Activated CD8-positive, alpha-beta T cell treated with anti-CD3 and anti-CD28 coated beads, Interleukin-2, amount 10 ng/mL, durations not matched to agents 7 days and 5 days (primary cell): ENCODE measurements at regions of chr10 and their contacts with region 1.

Region 1: GRCh38 chr10:103888113-103888841 is 29.7 kb downstream of the STN1 start:
- DNase-seq: no peak
- ATAC-seq: peak; percentile 79
- H3K4me3 Mint-ChIP-seq: no peak overlapping the region
- H3K27ac Mint-ChIP-seq: peak overlapping the region; percentile 61
- H3K4me1 Mint-ChIP-seq: peaks cover 23% of the 10 kb centered on the region
- H3K27me3 Mint-ChIP-seq: no peaks in the 10 kb centered on the region

Region 2: GRCh38 chr10:103712570-103713498 is 175.4 kb before region 1 on chr10:
- CTCF ChIA-PET with region 1: interaction called, 69 read pairs
- POLR2A ChIA-PET with region 1: no interaction called
- DNase-seq: peak; percentile 88
- ATAC-seq: peak; percentile 86
- H3K4me3 Mint-ChIP-seq: no peak overlapping the region
- H3K27ac Mint-ChIP-seq: no peak overlapping the region
- H3K4me1 Mint-ChIP-seq: peaks cover 5% of the 10 kb centered on the region
- H3K27me3 Mint-ChIP-seq: peaks cover 3% of the 10 kb centered on the region

Region 3: DNA sequence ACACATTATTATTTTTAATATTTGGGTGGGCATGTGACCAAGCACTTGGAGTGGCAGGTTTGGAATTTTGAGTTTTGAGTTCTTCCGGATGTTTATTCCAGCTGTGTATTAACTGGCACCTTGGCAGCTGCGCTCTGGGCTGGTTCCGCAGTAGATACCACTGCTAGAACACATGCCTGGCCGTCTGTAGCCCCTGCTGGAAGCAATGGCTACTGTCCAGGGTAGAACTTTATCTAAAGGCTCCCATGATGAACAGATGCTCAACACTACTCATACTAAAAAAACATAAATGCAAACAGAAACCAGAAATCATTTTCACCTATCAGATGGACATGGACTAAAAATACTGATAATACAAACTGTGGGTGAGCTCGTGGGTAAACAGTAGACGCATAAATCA is 13.5 kb before region 1 on chr10:
- CTCF ChIA-PET with region 1: interaction called, 28 read pairs
- POLR2A ChIA-PET with region 1: no interaction called
- DNase-seq: no peak
- ATAC-seq: no peak
- H3K4me3 Mint-ChIP-seq: no peak overlapping the region
- H3K27ac Mint-ChIP-seq: no peak overlapping the region
- H3K4me1 Mint-ChIP-seq: no peaks in the 10 kb centered on the region
- H3K27me3 Mint-ChIP-seq: no peaks in the 10 kb centered on the region

Region 4: DNA sequence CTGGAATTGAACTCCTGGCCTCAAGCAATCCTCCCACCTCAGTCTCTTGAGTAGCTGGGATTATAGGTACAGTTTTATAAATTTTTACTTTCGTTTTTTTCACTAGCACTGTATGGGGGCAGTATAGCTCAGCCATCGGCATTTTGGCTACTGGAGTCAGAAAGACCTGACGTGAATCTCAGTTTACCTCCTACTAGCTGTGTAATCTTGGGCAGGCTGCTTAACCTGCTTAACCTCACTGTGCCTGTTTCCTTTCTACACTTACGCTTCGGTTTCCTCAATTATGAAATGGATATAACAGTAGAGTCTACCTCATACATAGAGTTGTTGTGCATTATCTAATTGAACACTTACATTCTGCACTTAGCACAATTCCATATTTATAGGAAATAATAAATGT is 13.0 kb after region 1 on chr10:
- CTCF ChIA-PET with region 1: interaction called, 24 read pairs
- POLR2A ChIA-PET with region 1: interaction called, 3 read pairs
- DNase-seq: no peak
- ATAC-seq: peak; percentile 84
- H3K4me3 Mint-ChIP-seq: peak overlapping the region; percentile 10
- H3K27ac Mint-ChIP-seq: peak overlapping the region; percentile 48
- H3K4me1 Mint-ChIP-seq: peaks cover 49% of the 10 kb centered on the region
- H3K27me3 Mint-ChIP-seq: no peaks in the 10 kb centered on the region

Region 5: DNA sequence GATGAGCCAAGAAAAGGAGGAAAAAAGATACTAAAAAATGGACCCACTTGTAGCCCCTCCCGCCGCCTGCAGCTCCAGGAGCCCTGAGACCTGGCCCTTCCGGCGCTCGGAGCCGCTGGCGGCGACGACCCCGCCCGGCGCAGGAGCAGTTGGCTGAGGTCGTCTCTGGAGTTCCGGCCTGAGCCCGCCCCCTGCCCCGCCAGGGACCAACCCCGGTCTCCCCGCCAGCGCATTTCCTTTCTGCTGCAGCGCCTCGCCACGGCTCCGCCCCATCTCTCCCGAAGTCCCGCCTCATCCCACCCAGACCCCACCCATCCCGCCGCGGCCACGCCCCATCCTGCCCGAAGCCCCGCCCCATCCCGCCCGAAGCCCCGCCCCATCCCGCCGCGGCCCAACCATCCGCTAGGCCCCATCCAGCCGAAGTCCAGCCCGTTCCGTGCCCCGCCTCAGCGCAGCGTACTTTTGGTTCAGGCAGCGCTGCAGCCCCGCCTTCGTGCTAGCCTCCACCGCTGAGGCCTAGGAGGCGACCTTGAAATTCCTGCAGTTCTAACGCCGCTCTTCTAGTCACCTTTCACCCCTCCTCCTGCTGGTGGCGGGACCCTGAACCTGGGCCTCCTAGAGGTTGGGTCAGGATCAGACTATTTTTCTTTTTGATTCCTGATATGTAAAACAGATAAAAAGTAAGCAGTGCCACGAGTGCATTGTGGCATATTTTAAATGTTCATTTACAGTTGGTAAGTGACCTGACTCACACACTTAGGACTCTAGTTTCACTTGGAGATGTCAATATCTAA is 30.0 kb after region 1 on chr10 and contains the start of gene STN1:
- CTCF ChIA-PET with region 1: interaction called, 13 read pairs
- POLR2A ChIA-PET with region 1: interaction called, 4 read pairs
- DNase-seq: peak; percentile 97
- ATAC-seq: peak; percentile 95
- H3K4me3 Mint-ChIP-seq: peak within 1 kb of the TSS; percentile 98
- H3K27ac Mint-ChIP-seq: peak within 1 kb of the TSS; percentile 97
- H3K4me1 Mint-ChIP-seq: peaks cover 36% of the 10 kb centered on the region
- H3K27me3 Mint-ChIP-seq: no peaks in the 10 kb centered on the region
- total RNA-seq, gene STN1: 48.8 to 49.8 TPM

Region 6: GRCh38 chr10:104028146-104028545 is 139.9 kb after region 1 on chr10:
- CTCF ChIA-PET with region 1: interaction called, 10 read pairs
- POLR2A ChIA-PET with region 1: no interaction called
- DNase-seq: no peak
- ATAC-seq: no peak
- H3K4me3 Mint-ChIP-seq: no peak overlapping the region
- H3K27ac Mint-ChIP-seq: no peak overlapping the region
- H3K4me1 Mint-ChIP-seq: no peaks in the 10 kb centered on the region
- H3K27me3 Mint-ChIP-seq: no peaks in the 10 kb centered on the region

Region 7: GRCh38 chr10:104080762-104081161 is 192.5 kb after region 1 on chr10:
- CTCF ChIA-PET with region 1: interaction called, 26 read pairs
- POLR2A ChIA-PET with region 1: no interaction called
- DNase-seq: no peak
- ATAC-seq: peak; percentile 55
- H3K4me3 Mint-ChIP-seq: no peak overlapping the region
- H3K27ac Mint-ChIP-seq: no peak overlapping the region
- H3K4me1 Mint-ChIP-seq: no peaks in the 10 kb centered on the region
- H3K27me3 Mint-ChIP-seq: peaks cover 2% of the 10 kb centered on the region